Activated T-helper 1 cell treated with anti-CD3 and anti-CD28 coated beads, Interleukin-12 subunit alpha, Interleukin-12 subunit beta, Interleukin-2, Interleukin-4 antibody, amounts not matched to agents 30 ng/mL and 10 ng/mL and 1 ng/mL, durations not matched to agents 14 hours and 24 hours and 36 hours (primary cell): ENCODE measurements at regions of chr3 and their contacts with region 1.

Region 1: GRCh38 chr3:157088601-157089454 is 71.1 kb downstream of the CCNL1 start:
- DNase-seq: peak; percentile 93
- H3K4me3 Mint-ChIP-seq: peak overlapping the region; percentile 70
- H3K27ac Mint-ChIP-seq: peak overlapping the region; percentile 93
- H3K4me1 Mint-ChIP-seq: peaks cover 76% of the 10 kb centered on the region
- H3K27me3 Mint-ChIP-seq: no peaks in the 10 kb centered on the region

Region 2: DNA sequence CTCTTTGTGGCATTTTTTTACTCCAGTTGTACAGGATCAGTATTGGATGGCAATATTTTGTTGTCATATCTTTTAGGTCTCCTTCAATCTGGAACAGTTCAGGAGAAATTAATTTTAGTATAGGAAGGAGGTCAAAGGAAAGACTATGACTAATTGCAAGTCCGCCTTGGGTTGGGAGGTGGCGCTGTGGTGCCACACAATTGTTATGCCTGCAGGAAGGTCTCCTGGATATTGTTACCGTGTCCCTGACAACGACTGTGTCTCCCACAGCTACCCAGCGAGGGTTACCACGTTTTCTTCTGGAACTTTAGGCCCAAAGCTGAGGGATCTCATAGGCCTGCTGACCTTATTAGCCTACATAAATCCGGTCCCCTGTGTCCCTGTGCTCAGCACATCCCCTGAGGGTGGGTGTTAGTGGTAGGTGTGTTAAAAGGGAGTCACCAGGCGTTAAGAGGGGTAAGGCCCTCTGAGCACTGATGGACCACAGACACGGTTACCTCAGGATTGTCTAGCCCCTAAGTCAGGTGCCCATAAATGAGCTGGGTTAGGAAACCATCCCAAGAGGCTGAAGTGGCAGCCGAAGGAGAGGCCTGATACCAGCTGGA is 936.9 kb before region 1 on chr3:
- intact Hi-C with region 1: loop called (anchors 2 kb)
- DNase-seq: peak; percentile 11
- H3K4me3 Mint-ChIP-seq: no peak overlapping the region
- H3K27ac Mint-ChIP-seq: no peak overlapping the region
- H3K4me1 Mint-ChIP-seq: peaks cover 7% of the 10 kb centered on the region
- H3K27me3 Mint-ChIP-seq: peaks cover 7% of the 10 kb centered on the region

Region 3: DNA sequence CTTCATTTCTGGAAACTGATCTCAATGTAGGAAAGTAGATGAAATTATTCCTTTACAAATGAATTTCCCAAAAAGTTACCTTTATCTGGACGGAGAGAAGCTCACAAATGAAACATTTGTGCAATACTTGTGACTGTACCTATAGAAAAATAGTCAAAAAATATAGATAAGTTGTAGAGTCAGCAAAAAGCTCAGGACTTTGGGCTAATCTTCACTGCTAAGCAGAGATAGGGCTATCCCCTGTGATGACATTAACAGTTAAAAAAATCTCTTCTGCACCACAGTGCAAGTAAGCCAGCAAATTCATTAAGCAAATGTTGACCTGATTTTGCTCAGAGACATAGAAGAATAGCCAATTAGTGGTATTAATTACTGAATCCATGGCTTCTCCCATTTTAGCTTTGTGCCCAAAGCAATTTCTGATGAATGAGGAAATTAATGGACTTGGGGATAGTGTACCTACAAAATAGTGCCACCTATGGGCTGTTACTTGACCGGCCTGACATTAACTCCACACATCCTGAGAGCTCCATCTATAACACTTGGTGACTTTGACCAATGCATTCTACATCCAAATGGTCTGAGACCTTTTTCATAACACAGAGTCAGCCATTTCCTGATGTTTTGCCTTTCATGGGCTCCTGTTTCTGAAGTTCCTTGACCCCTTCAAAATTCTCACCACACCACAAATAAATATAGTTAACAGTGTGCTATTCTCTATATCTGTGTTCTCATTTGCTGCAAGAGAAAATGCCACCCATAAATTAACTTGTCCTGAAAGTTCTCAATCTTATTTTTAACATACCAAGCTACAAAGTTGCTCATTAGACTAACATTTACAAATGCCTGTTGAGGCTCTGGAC is 638.9 kb before region 1 on chr3:
- intact Hi-C with region 1: no loop called
- DNase-seq: no peak
- H3K4me3 Mint-ChIP-seq: no peak overlapping the region
- H3K27ac Mint-ChIP-seq: no peak overlapping the region
- H3K4me1 Mint-ChIP-seq: no peaks in the 10 kb centered on the region
- H3K27me3 Mint-ChIP-seq: peaks cover 35% of the 10 kb centered on the region

Region 4: DNA sequence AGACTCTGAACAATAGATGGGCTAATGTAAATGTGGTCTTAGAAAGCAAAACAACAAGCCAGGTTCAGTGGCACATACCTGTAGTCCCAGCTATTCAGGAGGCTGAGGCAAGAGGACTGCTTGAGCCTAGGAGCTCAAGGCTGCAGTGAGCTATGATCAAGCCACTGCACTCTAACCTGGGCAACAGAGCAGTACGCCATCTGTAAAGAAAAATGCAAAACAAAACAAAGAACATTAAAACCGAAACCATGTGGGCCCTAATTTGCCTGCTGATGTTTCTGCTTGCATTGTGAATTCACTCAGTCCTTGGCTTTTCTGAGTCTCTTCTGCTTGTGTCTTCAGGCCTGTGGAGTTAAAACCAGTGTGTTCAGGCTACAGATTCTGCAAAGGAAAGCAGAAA is 14.5 kb after region 1 on chr3:
- intact Hi-C with region 1: loop called (anchors 1 kb)
- DNase-seq: no peak
- H3K4me3 Mint-ChIP-seq: peak overlapping the region; percentile 67
- H3K27ac Mint-ChIP-seq: peak overlapping the region; percentile 87
- H3K4me1 Mint-ChIP-seq: peaks cover 72% of the 10 kb centered on the region
- H3K27me3 Mint-ChIP-seq: no peaks in the 10 kb centered on the region

Region 5: GRCh38 chr3:157130467-157131251 is 41.8 kb after region 1 on chr3:
- intact Hi-C with region 1: loop called (anchors 1 kb)
- DNase-seq: peak; percentile 72
- H3K4me3 Mint-ChIP-seq: peak overlapping the region; percentile 59
- H3K27ac Mint-ChIP-seq: peak overlapping the region; percentile 90
- H3K4me1 Mint-ChIP-seq: peaks cover 84% of the 10 kb centered on the region
- H3K27me3 Mint-ChIP-seq: no peaks in the 10 kb centered on the region

Region 6: GRCh38 chr3:157159762-157160657 is 71.2 kb after region 1 on chr3 and contains the start of gene CCNL1:
- intact Hi-C with region 1: loop called (anchors 1 kb)
- DNase-seq: peak; percentile 95
- H3K4me3 Mint-ChIP-seq: peak within 1 kb of the TSS; percentile 93
- H3K27ac Mint-ChIP-seq: peak within 1 kb of the TSS; percentile 94
- H3K4me1 Mint-ChIP-seq: peaks cover 64% of the 10 kb centered on the region
- H3K27me3 Mint-ChIP-seq: no peaks in the 10 kb centered on the region
- total RNA-seq, gene CCNL1: 167 and 204 TPM in 2 replicates